ENCODE measurements at regions of chr16 and their contacts with region 1.

Region 1: GRCh38 chr16:11328172-11329070 is 16.8 kb upstream of the RMI2 start:
- DNase-seq: peak; percentile 78 to 94
- H3K4me3 ChIP-seq: peak overlapping the region in 3 of 4 experiments; percentile 5 to 50 (median 23); a peak in 4 of 8 replicates
- H3K27ac ChIP-seq: peak overlapping the region; percentile 94
- H3K4me1 ChIP-seq: peaks cover 13 to 16% (median 13%) of the 10 kb centered on the region in 4 experiments; a peak in 6 of 7 replicates
- H3K27me3 ChIP-seq: no peaks in the 10 kb centered on the region
- CTCF ChIP-seq: no peak
- EP300 ChIP-seq: peak in 1 of 2 experiments; percentile 8; a peak in 1 of 3 replicates
- POLR2A ChIP-seq: no peak
- RAD21 ChIP-seq: peak in 1 of 2 experiments; percentile 15; a peak in 1 of 4 replicates

Region 2: DNA sequence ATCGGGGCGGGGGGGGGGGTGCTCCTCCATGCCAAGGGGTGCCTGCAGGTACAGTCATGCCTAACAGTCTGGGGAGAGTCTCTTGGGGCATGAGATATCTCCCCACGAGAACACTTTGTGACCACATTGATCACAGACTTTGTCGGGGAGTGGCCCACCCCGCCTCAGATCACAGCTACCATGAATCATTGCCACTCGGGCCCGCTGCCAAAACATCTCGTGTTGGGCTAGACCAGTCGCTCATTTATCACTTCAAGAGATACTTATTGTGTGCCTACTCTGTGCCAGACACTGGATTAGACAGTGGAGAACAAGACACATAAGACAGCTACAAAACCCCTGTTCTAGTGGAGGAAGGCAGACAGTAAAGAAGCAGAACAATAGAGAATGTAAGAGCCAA is 311.4 kb before region 1 on chr16:
- CTCF ChIA-PET with region 1: no interaction called
- POLR2A ChIA-PET with region 1: no interaction called
- DNase-seq: no peak
- H3K4me3 ChIP-seq: no peak overlapping the region
- H3K27ac ChIP-seq: no peak overlapping the region
- H3K4me1 ChIP-seq: peaks cover 0 to 2% (median 0%) of the 10 kb centered on the region in 4 experiments; a peak in 1 of 7 replicates
- H3K27me3 ChIP-seq: no peaks in the 10 kb centered on the region
- CTCF ChIP-seq: no peak
- EP300 ChIP-seq: no peak
- POLR2A ChIP-seq: no peak
- RAD21 ChIP-seq: no peak

Region 3: DNA sequence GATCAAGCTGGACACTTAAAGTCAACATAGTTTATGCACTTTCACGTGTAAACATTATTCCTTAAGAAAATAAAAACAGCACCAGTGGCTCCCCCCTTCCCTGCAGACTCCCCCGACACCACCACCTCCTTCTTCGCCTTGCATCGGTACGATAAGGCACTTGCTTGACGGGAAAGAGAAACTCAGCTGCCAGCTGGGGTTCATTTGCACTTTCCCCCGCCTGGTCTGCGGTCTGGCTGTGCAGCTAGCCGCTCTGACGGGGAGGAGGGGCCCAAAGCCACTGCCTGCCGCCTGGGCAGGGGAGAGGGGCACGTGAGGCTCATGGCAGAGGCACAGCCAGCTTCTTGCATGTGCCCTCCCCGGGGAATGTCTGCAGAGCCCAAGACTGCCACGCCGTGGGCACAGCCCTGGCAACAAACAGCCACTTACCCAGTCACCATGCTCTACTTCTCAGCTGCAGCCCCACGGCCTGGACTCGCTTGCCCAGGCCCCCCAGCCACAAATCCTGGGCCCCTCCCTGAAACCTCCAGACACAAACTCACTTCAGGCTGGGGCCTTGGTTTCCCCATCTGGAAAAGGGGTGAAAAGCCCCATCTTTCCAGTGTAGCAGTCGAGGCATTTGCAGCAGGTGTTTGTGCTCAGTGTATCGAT is 30.8 kb before region 1 on chr16:
- CTCF ChIA-PET with region 1: interaction called, 3 read pairs
- POLR2A ChIA-PET with region 1: interaction called, 10 read pairs
- DNase-seq: peak in 1 of 2 experiments; percentile 66
- H3K4me3 ChIP-seq: no peak overlapping the region
- H3K27ac ChIP-seq: no peak overlapping the region
- H3K4me1 ChIP-seq: peaks cover 5 to 9% (median 9%) of the 10 kb centered on the region in 4 experiments
- H3K27me3 ChIP-seq: no peaks in the 10 kb centered on the region
- CTCF ChIP-seq: no peak
- EP300 ChIP-seq: no peak
- POLR2A ChIP-seq: no peak
- RAD21 ChIP-seq: no peak

Region 4: DNA sequence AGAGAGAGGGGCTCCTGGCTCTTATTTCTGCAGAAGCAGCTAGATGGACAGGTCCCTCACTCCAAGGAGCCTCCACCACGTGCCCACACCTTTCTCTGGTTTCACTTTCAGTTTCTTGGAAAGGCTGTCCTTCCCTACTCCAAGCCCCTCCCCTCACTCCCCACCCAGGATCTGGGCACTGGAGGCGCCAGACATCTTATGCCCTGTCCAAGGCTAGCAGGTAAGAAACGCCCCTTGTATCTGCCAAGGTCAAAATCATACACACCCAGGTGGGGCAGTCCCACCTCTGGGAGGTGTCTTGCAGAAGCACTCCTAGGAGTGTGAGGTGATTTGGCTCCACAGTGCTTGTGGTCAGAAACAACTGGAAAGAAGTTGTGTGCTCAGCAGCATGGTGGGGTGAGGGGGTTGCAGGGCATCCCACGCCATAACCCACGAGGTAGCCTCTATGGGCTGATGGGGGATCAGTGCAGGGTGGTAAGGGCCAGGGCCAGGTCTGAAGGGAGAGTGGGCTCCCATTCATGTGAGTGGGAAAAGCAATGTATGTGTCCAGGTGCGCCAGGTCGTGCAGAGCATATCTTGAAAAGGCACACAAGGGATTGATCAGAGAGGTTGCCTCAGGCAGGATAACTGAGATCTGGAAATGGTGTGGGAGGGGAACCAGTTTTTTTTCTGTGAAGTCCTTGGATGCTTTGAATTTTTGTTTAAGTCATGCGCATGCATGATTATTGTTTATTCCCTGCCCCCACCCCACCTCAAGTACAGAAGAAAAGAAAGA is 15.5 kb before region 1 on chr16:
- CTCF ChIA-PET with region 1: interaction called, 3 read pairs
- POLR2A ChIA-PET with region 1: interaction called, 29 read pairs
- DNase-seq: no peak
- H3K4me3 ChIP-seq: peak overlapping the region in 1 of 4 experiments; percentile 2; a peak in 1 of 8 replicates
- H3K27ac ChIP-seq: peak overlapping the region; percentile 61; the same call in 1 of the 2 replicates
- H3K4me1 ChIP-seq: peaks cover 26 to 45% (median 26%) of the 10 kb centered on the region in 4 experiments
- H3K27me3 ChIP-seq: no peaks in the 10 kb centered on the region
- CTCF ChIP-seq: no peak
- EP300 ChIP-seq: peak in 1 of 2 experiments; percentile 6; a peak in 1 of 3 replicates
- POLR2A ChIP-seq: no peak
- RAD21 ChIP-seq: no peak

Region 5: GRCh38 chr16:11345040-11345862 is 16.8 kb after region 1 on chr16 and contains the start of gene RMI2:
- CTCF ChIA-PET with region 1: interaction called, 4 read pairs
- POLR2A ChIA-PET with region 1: interaction called, 21 read pairs
- DNase-seq: peak; percentile 84 to 93
- H3K4me3 ChIP-seq: peak within 1 kb of the TSS; percentile 50 to 94 (median 69)
- H3K27ac ChIP-seq: peak within 1 kb of the TSS; percentile 84; the same call in 1 of the 2 replicates
- H3K4me1 ChIP-seq: peaks cover 6 to 24% (median 14%) of the 10 kb centered on the region in 4 experiments
- H3K27me3 ChIP-seq: no peaks in the 10 kb centered on the region
- CTCF ChIP-seq: no peak
- EP300 ChIP-seq: no peak
- POLR2A ChIP-seq: peak; percentile 79 to 81
- RAD21 ChIP-seq: no peak
- total RNA-seq, gene RMI2: 96.0 and 96.9 TPM in 2 replicates

Measured in H1 (cell line).